ENCODE measurements at regions of chr9 and their contacts with region 1.

Region 1: GRCh38 chr9:95510709-95511615 is 5.8 kb downstream of the PTCH1 start:
- DNase-seq: peak; percentile 77 to 92 (median 90)
- H3K4me3 ChIP-seq: peak overlapping the region; percentile 62 to 92 (median 83)
- H3K27ac ChIP-seq: peak overlapping the region; percentile 66 to 98 (median 95)
- H3K27me3 ChIP-seq: no peaks in the 10 kb centered on the region
- CTCF ChIP-seq: peak in 12 of 56 donors; percentile 3 to 24 (median 14)

Region 2: DNA sequence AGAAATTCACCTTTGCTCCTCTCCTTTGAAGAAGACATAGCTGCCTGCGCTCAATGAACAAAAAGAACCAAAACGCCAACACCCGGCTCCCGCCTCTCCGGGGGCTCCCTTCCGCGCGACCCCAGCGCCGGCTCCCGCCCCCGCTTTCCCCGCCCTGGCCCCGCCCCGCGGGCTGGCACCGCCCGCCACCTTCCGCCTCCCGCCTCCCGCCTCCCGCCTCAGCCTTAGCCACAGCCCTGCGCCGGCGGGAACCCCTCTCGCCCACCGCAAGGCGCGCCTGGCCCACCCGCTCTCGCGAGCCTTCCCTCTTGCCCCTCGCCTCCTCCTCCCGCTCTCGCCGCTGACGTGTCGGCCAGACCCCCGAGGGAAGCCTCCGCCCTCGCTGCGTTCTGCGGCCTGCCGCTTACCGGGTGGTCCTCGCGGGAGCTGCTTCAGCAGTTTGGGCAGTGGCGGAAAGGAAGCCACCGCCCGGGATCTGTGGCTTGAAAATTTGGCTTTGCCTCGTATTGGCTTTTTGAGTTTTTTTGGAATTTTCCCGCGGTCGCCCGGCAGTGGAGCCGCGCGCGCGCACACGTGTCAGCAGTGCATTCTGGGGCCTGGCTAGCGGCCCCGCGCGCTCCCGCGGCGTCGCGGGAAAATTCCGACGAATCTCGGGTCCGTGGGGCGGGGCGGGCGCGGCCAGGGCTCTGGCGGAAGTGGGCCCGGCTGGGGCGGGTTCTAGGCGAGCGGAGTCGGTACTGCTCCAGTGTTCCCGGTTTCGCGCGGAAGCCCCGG is 193.7 kb before region 1 on chr9 and contains the start of gene FANCC:
- intact Hi-C with region 1: loop called (anchors 2 kb)
- DNase-seq: peak; percentile 83 to 95 (median 88)
- H3K4me3 ChIP-seq: peak within 1 kb of the TSS; percentile 68 to 100 (median 94)
- H3K27ac ChIP-seq: peak within 1 kb of the TSS; percentile 40 to 98 (median 92)
- H3K27me3 ChIP-seq: no peaks in the 10 kb centered on the region
- CTCF ChIP-seq: peak in 25 of 56 donors; percentile 6 to 47 (median 21)
- total RNA-seq, gene FANCC: 2.8 to 23.5 (median 7.3) TPM

Region 3: GRCh38 chr9:95462249-95463147 is 48.5 kb before region 1 on chr9:
- intact Hi-C with region 1: loop called (anchors 1 to 2 kb)
- DNase-seq: peak; percentile 64 to 86 (median 83)
- H3K4me3 ChIP-seq: peak overlapping the region; percentile 2 to 65 (median 45)
- H3K27ac ChIP-seq: peak overlapping the region; percentile 46 to 94 (median 85)
- H3K27me3 ChIP-seq: no peaks in the 10 kb centered on the region
- CTCF ChIP-seq: peak in 10 of 56 donors; percentile 11 to 26 (median 16)

Region 4: DNA sequence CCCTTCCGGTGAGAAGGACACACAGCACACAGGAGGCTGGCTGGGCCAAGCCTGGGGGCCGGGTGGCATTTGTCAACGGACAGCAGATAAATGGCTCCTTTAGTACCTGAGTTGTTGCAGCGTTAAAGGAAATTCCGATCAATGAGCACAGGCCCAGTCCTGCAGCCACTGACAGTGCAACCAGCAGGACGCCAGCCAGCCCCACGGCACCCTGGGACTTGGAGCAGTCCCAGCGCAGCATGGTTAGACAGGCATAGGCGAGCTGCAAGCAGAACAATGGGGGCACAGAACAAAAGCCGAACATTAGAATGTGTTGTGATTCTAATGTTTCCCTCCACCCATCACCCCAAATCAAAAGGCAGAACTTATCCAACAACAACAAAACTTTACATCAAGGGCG is 33.5 kb before region 1 on chr9:
- intact Hi-C with region 1: loop called (anchors 2 to 5 kb)
- DNase-seq: peak; percentile 66 to 97 (median 90)
- H3K4me3 ChIP-seq: peak overlapping the region in 24 of 59 donors; percentile 3 to 47 (median 20)
- H3K27ac ChIP-seq: peak overlapping the region; percentile 23 to 96 (median 87)
- H3K27me3 ChIP-seq: no peaks in the 10 kb centered on the region
- CTCF ChIP-seq: peak in 14 of 56 donors; percentile 11 to 51 (median 22)

Region 5: DNA sequence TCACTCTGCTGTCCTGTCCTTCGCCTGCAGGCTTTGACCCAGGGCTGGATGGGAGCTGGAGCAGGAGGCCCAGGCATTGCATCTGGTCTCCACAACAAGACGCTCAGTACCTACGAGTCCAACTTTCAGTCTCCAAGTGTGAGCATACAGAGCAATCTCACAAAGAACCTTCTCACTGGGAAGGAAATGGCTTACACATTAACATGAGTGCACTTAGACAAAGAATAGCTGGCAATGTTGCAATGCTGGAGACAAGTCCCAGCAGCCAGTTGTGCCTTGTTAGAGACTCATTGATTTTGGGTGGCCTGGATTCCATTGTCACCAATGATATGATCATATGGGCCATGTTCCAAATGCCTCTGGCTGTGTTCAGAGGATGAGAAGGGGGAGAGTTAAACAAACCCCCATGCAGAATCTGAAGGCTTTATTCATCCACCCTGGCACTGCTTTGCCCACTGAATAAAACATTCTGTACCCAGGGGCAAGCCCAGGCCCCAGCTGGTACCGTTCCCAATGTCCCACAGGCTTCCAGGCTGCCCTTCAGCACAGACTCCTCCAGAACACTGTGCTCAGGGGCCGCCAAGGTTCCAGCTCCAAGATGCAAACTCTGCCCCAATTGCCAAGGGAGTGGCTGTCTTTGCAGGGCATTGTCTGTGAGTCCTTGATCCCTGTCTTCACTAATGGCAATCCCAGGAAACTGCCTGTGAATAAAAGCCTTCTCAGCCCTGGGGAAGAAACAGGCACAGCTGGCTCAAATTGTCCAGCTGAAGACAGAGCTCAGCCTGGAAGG is 605.5 kb after region 1 on chr9:
- intact Hi-C with region 1: loop called in 1 of 2 experiments (anchors 10 kb)
- DNase-seq: peak; percentile 41 to 96 (median 90)
- H3K4me3 ChIP-seq: peak overlapping the region in 50 of 59 donors; percentile 1 to 63 (median 32)
- H3K27ac ChIP-seq: peak overlapping the region; percentile 75 to 99 (median 94)
- H3K27me3 ChIP-seq: no peaks in the 10 kb centered on the region
- CTCF ChIP-seq: peak in 9 of 56 donors; percentile 8 to 37 (median 12)

Measured in dorsolateral prefrontal cortex (tissue), 120 donors.